RWPE1 (cell line): ENCODE measurements at regions of chr17 and their contacts with region 1.

Region 1: GRCh38 chr17:81833160-81833920 is at the start of gene MCRIP1:
- DNase-seq: peak; percentile 95
- H3K27ac ChIP-seq: peak within 1 kb of the TSS; percentile 92
- CTCF ChIP-seq: no peak

Region 2: GRCh38 chr17:81808778-81809555 is 24.4 kb before region 1 on chr17:
- CTCF ChIA-PET with region 1: no interaction called
- POLR2A ChIA-PET with region 1: no interaction called
- DNase-seq: no peak
- H3K27ac ChIP-seq: no peak overlapping the region
- CTCF ChIP-seq: 0 out of 2 replicates have a peak, but pooled peaks have one; percentile 11

Region 3: GRCh38 chr17:81821603-81822311 is 11.6 kb before region 1 on chr17:
- CTCF ChIA-PET with region 1: no interaction called
- POLR2A ChIA-PET with region 1: no interaction called
- DNase-seq: no peak
- H3K27ac ChIP-seq: peak overlapping the region; percentile 55
- CTCF ChIP-seq: peak; percentile 48

Region 4: DNA sequence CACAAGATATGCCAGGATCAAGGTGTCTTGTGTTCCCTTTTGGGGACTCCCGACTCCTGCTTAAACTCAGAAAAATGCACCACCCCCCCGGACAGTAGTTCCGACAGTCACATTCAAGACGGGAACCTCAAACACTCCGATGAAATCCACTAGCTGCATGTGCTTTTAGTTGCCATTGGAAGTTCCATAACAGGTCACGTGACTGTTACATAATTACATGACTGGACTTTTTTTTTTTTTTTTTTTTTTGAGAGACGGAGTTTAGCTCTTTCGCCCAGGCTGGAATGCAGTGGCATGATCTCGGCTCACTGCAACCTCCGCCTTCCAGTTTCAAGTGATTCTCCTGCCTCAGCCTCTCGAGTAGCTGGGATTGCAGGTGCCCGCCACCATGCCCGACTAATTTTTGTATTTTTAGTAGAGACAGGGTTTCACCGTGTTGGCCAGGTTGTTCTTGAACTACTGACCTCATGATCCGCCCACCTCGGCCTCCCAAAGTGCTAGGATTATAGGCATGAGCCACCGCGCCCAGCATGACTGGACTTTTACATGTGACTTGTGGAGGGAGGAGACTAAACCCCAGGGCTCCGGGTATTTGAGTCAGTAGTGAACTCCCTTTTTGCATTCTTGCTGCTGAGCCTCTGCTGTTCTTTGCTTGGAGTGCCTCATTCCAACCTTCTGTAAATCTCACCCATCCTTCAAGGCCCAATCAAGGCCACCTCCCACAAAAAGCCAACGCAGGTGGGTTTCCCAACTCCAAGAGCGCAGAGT is 83.1 kb after region 1 on chr17:
- CTCF ChIA-PET with region 1: no interaction called
- POLR2A ChIA-PET with region 1: interaction called, 10 read pairs
- DNase-seq: peak; percentile 79
- H3K27ac ChIP-seq: peak overlapping the region; percentile 98
- CTCF ChIP-seq: no peak